ENCODE measurements at regions of chr4 and their contacts with region 1.

Region 1: DNA sequence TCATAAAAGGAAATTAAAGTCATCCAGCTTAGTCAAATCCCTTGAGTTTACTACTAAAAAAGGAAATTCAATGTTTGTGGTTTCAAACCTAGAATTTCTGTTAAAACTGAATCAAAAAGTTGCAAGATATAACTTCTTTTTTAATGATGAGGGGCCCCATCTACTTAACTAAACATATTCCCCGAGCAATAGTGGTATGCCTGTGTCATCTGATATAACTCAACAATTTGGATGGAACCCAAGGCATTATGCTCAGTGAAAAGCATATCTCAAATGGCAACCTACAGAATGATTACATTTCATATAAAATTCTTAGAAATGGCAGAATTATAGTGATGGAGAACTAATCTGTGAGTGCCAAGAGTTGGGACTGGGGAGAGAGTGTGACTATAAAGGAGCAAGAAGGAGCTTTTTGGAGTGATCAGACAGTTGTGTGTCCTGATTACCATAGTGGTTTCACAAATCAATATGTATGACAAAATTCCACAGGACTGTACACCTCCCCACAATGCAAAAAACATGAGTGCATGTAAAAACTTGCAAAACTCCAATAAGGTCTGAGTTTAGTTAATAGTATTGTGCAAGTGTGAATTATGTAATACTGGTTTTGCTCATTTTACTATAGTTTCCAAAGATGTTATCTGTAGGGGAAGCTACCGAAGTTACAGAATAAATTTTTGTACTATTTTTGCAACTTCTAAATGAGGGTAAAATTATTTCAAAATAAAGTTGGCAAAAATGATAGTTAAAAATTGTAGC is 323.2 kb downstream of the ARHGAP24 start:
- DNase-seq: no peak
- ATAC-seq: no peak
- H3K4me3 ChIP-seq: no peak overlapping the region
- H3K27ac ChIP-seq: no peak overlapping the region
- H3K4me1 ChIP-seq: no peaks in the 10 kb centered on the region
- CTCF ChIP-seq: no peak
- EP300 ChIP-seq: no peak
- POLR2A ChIP-seq: no peak
- RAD21 ChIP-seq: no peak

Region 2: DNA sequence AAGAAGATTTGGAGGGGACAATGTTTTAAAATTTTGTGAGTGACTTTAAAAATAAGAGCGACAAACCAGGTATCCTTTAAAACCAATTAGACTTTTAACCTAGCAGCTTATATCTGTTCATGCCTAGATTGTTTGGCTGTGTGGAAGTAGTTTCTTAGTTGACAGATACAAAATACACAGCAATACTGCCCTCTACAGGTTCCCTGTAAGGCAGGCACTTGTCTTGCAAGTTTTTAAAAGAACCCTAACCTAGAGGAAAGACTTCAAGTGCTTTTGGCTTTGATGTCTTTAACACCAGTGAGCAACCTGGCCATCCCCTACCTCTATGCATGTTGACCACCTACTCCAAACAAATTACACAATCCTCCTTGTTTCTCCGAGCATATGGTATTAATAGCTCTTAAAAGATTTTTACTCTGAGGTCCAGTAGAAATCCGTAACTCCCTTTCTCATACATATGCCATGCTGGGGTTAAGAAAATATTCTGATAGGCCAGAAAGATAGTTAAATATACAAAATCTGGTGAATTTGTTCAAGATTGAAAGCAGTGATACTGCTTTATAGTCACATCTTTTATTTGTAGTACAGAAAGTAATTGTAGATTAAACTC is 50.2 kb before region 1 on chr4:
- CTCF ChIA-PET with region 1: interaction called, 10 read pairs
- POLR2A ChIA-PET with region 1: no interaction called
- DNase-seq: peak; percentile 7 to 80
- ATAC-seq: peak; percentile 24 to 84; a peak in 3 of 6 replicates
- H3K4me3 ChIP-seq: no peak overlapping the region
- H3K27ac ChIP-seq: no peak overlapping the region
- H3K4me1 ChIP-seq: peaks cover 22% of the 10 kb centered on the region
- CTCF ChIP-seq: peak; percentile 77
- EP300 ChIP-seq: no peak
- POLR2A ChIP-seq: no peak
- RAD21 ChIP-seq: peak; percentile 87 to 88

Region 3: DNA sequence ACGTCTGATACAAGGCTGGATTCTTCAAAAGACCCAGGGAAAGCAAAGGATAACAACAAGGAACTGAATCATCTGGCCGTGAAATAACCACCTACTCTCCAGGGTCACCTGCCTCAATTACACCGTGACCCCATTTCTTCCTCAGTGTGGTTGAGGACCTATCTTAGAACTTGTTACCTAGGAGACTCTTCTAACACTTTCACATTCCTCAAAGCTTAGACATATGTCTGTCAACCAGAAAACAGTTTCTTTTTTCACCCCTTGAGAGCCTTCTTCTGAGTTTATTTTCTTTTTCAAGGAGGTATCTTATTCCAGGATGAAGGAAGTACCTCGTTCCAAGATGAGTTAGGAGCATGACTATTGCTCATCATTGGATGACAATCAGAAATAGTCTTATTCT is 14.6 kb after region 1 on chr4:
- CTCF ChIA-PET with region 1: interaction called, 24 read pairs
- POLR2A ChIA-PET with region 1: no interaction called
- DNase-seq: no peak
- ATAC-seq: no peak
- H3K4me3 ChIP-seq: no peak overlapping the region
- H3K27ac ChIP-seq: no peak overlapping the region
- H3K4me1 ChIP-seq: 0 out of 3 replicates have a peak, but pooled peaks cover 5% of the 10 kb centered on the region
- CTCF ChIP-seq: no peak
- EP300 ChIP-seq: no peak
- POLR2A ChIP-seq: no peak
- RAD21 ChIP-seq: no peak

Region 4: DNA sequence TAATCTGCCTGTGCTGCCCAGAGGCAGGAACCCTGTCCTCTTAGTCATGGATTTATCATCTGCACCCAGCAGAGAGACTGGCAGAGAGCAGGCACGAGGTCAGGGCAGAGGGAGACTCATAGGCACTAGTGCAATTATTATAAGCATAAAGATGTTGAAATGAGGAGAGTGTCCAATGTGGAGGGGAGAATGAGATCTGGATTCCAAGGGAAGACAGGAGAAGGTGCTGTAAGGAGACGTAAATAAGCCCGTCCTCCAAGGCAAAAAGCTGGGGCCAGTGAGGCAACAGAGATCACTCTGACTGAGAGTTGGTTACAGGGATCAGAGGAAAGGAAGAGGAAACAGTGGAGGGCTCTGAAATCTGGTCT is 155.4 kb after region 1 on chr4:
- CTCF ChIA-PET with region 1: interaction called, 22 read pairs
- POLR2A ChIA-PET with region 1: no interaction called
- DNase-seq: peak; percentile 28 to 74
- ATAC-seq: peak; percentile 98 to 99
- H3K4me3 ChIP-seq: no peak overlapping the region
- H3K27ac ChIP-seq: peak overlapping the region; percentile 64 to 78
- H3K4me1 ChIP-seq: peaks cover 30% of the 10 kb centered on the region
- CTCF ChIP-seq: no peak
- EP300 ChIP-seq: no peak
- POLR2A ChIP-seq: no peak
- RAD21 ChIP-seq: no peak

Region 5: DNA sequence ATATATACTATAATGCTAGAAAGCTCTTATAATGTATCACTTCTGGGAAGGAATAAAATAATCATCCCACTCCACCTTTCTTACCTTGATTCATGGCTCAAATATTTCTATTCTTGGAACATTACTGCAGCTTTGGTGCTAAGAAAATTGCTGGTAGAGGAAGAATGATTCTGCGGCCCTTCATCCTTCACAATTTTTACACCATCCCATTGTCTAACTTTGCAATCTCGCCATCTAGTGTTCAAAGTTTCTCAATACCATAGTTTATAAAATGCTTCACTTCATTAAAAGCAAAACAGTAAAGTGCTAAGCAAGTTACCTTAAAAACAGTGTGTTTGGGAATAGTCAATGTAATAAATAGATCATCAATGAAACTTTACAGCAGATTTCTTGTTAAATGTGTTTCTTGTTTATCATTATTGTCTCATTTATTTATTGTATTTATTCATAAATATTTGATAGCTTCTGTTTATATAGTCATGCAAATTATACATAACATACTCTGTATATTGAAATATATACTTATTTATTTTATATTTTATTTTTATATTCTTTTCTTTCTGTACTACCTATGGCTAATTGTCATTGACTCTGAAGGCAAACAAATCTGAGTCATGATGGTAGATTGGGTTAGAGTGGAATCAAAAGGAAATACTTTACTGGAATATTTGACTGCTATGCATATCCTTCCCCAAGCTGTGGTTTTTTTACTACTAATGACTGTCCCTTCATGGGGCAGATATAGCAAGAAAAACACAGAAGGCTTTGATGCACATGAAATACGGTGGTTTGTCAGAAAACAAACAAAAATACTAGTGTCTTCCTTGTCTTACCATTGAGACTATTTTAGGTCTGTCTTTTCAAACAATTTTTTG is 171.0 kb after region 1 on chr4:
- CTCF ChIA-PET with region 1: interaction called, 117 read pairs
- POLR2A ChIA-PET with region 1: interaction called, 4 read pairs
- DNase-seq: peak; percentile 18 to 35
- ATAC-seq: peak in 1 of 2 experiments; percentile 63; a peak in 2 of 6 replicates
- H3K4me3 ChIP-seq: no peak overlapping the region
- H3K27ac ChIP-seq: no peak overlapping the region
- H3K4me1 ChIP-seq: no peaks in the 10 kb centered on the region; the same call in 2 of the 3 replicates
- CTCF ChIP-seq: peak; percentile 64
- EP300 ChIP-seq: no peak
- POLR2A ChIP-seq: no peak
- RAD21 ChIP-seq: peak; percentile 78 to 81

Measured in A549 (cell line).